ENCODE measurements at regions of chr19 and their contacts with region 1.

Region 1: GRCh38 chr19:2315818-2316353 is 7.9 kb upstream of the LINGO3 start:
- DNase-seq: peak; percentile 48
- H3K4me3 ChIP-seq: no peak overlapping the region
- H3K27ac ChIP-seq: no peak overlapping the region
- H3K4me1 ChIP-seq: no peaks in the 10 kb centered on the region
- H3K27me3 ChIP-seq: peaks cover 1 to 10% of the 10 kb centered on the region in 2 experiments
- CTCF ChIP-seq: peak; percentile 54 to 64
- POLR2A ChIP-seq: no peak

Region 2: GRCh38 chr19:1929021-1929742 is 386.7 kb before region 1 on chr19:
- CTCF ChIA-PET with region 1: interaction called, 11 read pairs
- POLR2A ChIA-PET with region 1: no interaction called
- dilution Hi-C with region 1: no loop called
- intact Hi-C with region 1: loop called (anchors 10 kb)
- DNase-seq: peak; percentile 64
- H3K4me3 ChIP-seq: peak overlapping the region in 2 of 3 experiments; percentile 23 to 26
- H3K27ac ChIP-seq: no peak overlapping the region
- H3K4me1 ChIP-seq: peaks cover 4% of the 10 kb centered on the region
- H3K27me3 ChIP-seq: no peaks in the 10 kb centered on the region
- CTCF ChIP-seq: peak; percentile 82 to 97
- POLR2A ChIP-seq: no peak

Region 3: DNA sequence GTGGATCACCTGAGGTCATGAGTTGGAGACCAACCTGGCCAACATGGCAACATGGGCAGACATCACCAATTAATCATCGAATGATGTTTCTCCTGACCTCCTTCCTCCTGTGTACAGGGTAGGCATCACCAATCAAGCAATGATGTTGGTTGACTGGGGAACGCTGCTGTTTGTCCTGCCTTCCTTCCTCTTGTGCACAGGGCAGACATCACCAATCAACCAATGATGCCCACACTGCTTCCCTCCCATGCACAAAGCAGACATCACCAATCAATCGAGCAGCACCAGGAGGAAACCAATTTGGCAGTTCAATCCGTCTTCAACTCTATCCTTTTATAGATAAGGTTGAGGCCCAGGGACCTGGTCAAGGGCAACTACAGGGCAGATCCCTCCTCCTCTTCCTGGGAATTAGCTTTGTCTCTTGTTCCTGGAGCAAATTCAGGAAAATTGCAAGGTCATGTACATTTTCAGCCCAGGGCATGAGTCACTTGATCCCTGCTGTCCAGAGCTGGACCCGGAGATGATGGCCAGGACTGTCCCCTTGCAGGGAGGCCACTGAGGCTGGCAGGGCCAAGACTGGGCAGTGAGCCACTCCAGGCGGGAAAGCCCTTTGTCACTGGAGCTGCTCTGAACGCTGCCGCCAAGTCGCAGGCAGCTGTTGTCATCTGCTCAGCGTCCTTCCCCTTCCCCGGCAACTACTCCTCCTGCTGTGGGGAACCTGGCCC is 380.2 kb before region 1 on chr19:
- CTCF ChIA-PET with region 1: interaction called, 11 read pairs
- POLR2A ChIA-PET with region 1: no interaction called
- dilution Hi-C with region 1: no loop called
- intact Hi-C with region 1: loop called (anchors 10 kb)
- DNase-seq: peak; percentile 21
- H3K4me3 ChIP-seq: no peak overlapping the region
- H3K27ac ChIP-seq: no peak overlapping the region
- H3K4me1 ChIP-seq: peaks cover 7% of the 10 kb centered on the region
- H3K27me3 ChIP-seq: no peaks in the 10 kb centered on the region
- CTCF ChIP-seq: no peak
- POLR2A ChIP-seq: no peak

Region 4: DNA sequence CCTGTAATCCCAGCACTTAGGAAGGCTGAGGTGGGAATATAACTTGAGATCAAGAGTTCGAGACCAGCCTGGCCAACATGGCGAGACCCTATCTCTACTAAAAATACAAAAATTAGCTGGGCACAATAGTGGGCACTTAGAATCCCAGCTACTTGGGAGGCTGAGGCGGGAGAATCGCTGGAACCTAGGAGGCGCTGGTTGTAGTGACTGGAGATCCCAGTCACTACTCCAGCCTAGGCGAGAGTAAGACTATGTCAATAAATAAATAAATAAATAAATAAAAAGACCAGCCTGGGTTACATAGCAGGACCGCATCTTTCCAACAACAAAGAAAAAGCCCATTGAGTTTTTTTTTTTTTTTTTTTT is 154.2 kb before region 1 on chr19:
- CTCF ChIA-PET with region 1: interaction called, 12 read pairs
- POLR2A ChIA-PET with region 1: no interaction called
- dilution Hi-C with region 1: no loop called
- intact Hi-C with region 1: loop called (anchors 1 kb)
- DNase-seq: peak; percentile 16
- H3K4me3 ChIP-seq: no peak overlapping the region
- H3K27ac ChIP-seq: peak overlapping the region; percentile 32
- H3K4me1 ChIP-seq: peaks cover 6% of the 10 kb centered on the region
- H3K27me3 ChIP-seq: no peaks in the 10 kb centered on the region
- CTCF ChIP-seq: no peak
- POLR2A ChIP-seq: no peak

Region 5: DNA sequence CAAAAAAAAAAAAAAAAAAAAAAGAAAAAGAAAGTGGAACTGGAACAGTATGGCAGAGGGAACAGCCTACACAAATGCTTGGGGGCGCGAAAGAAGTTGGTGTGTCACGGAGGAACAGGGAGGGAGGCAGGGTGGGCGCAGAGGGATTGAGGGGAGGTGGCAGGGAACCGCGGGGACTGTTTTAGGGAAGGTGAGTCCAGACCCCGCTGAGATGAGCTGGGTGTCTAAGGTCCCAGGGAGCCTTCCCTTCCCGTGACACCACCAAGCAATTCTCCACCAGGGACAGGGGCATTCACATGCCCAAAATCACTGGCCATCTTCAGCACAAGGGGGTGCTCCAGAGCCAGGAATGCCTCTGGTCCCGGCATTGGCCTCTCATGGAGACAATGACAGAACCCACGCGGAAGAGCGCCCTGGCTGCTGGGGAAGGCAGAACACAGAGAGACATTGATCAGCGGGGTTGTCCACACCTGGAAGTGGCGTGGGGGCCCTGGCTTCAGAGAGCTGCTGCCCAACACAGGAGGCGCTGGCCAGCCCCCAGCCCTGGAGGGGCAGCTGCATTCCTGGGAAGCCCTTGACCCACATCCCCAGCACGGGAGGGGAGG is 40.9 kb before region 1 on chr19:
- CTCF ChIA-PET with region 1: interaction called, 7 read pairs
- POLR2A ChIA-PET with region 1: no interaction called
- dilution Hi-C with region 1: no loop called
- intact Hi-C with region 1: loop called (anchors 1 kb)
- DNase-seq: peak; percentile 60
- H3K4me3 ChIP-seq: no peak overlapping the region
- H3K27ac ChIP-seq: no peak overlapping the region
- H3K4me1 ChIP-seq: peaks cover 27% of the 10 kb centered on the region
- H3K27me3 ChIP-seq: no peaks in the 10 kb centered on the region
- CTCF ChIP-seq: peak; percentile 43 to 56
- POLR2A ChIP-seq: no peak

Region 6: DNA sequence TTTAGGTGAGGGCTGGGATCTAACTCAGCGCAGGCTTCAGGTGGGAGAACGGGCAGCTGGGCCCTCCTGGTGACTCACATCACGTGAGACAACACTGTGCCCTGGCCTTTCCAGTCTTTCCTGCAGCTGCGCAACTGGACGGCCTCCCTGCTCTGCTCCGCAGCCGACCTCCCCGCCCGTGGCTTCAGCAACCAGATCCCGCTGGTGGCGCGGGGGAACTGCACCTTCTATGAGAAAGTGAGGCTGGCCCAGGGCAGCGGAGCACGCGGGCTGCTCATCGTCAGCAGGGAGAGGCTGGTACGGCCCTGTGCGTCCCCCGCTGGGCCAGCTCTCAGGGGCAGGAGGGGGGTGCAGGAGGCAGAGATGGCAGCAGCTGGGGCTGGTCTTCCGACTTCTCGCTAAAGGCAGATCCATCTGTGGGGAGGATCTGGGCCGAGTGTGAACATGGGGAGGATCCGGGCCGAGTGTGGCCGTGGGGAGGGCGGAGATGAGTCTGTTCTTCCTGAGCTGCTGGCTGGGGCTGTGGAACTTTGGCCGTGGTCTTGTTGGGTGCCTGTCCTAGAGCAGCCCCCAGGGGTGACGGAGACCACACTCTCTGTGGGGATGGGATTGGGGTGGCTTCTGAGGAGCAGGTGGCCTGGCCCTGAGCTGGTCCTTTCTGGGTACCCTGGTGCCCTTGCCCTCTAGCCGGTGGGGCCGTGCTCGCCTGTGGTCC is 21.6 kb after region 1 on chr19:
- CTCF ChIA-PET with region 1: no interaction called
- POLR2A ChIA-PET with region 1: no interaction called
- dilution Hi-C with region 1: no loop called
- intact Hi-C with region 1: no loop called
- DNase-seq: no peak
- H3K4me3 ChIP-seq: no peak overlapping the region
- H3K27ac ChIP-seq: no peak overlapping the region
- H3K4me1 ChIP-seq: no peaks in the 10 kb centered on the region
- H3K27me3 ChIP-seq: no peaks in the 10 kb centered on the region
- CTCF ChIP-seq: no peak
- POLR2A ChIP-seq: no peak

Region 7: DNA sequence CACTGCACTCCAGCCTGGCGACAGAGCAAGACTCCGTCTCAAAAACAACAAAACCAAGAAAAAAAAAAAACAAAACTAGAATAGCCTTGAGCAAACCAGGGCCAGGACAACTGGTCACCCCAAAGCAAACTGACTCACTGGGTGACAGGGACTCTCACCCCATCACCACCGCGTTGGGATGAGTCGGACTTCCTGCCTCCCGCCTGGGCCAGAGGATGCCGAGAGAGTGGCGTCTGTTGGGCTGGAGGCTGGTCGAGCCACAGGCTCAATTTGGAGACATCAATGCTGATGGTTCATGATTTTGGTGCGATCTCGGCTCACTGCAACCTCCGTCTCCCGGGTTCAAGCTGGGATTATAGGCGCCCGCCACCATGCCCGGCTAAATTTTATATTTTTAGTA is 55.8 kb after region 1 on chr19:
- CTCF ChIA-PET with region 1: no interaction called
- POLR2A ChIA-PET with region 1: no interaction called
- dilution Hi-C with region 1: no loop called
- intact Hi-C with region 1: no loop called
- DNase-seq: no peak
- H3K4me3 ChIP-seq: no peak overlapping the region
- H3K27ac ChIP-seq: no peak overlapping the region
- H3K4me1 ChIP-seq: no peaks in the 10 kb centered on the region
- H3K27me3 ChIP-seq: peaks cover 0 to 2% of the 10 kb centered on the region in 2 experiments
- CTCF ChIP-seq: no peak
- POLR2A ChIP-seq: no peak

Measured in endothelial cell of umbilical vein (primary cell).